Right ventricle myocardium superior (tissue), 1 donor: ENCODE measurements at regions of chr4 and their contacts with region 1.

Region 1: GRCh38 chr4:140884431-140885058 is 128.4 kb upstream of the TBC1D9 start:
- DNase-seq: no peak
- ATAC-seq: peak; percentile 73

Region 2: DNA sequence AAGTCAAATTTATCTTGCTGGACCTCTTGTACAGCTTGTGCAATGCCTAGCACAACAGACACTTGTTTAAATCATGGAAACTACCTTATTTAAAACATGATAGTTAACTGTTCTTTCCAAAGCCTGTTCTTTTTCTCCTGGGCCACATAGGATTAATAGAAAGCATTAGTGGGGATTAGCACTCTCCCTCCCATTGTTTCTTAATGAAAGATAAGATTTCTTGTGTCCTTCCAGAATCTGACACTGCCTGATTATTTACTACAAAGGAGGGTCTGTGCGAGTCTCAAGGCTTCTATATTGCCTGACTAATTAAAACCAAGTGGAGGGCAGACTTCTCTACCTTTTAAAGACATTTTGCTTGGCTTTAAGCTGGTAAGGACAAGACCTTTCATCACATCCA is 369.1 kb before region 1 on chr4:
- intact Hi-C with region 1: no loop called
- DNase-seq: no peak
- ATAC-seq: no peak

Region 3: GRCh38 chr4:140982613-140983340 is 98.2 kb after region 1 on chr4:
- intact Hi-C with region 1: loop called (anchors 10 kb)
- DNase-seq: no peak
- ATAC-seq: peak; percentile 72

Region 4: DNA sequence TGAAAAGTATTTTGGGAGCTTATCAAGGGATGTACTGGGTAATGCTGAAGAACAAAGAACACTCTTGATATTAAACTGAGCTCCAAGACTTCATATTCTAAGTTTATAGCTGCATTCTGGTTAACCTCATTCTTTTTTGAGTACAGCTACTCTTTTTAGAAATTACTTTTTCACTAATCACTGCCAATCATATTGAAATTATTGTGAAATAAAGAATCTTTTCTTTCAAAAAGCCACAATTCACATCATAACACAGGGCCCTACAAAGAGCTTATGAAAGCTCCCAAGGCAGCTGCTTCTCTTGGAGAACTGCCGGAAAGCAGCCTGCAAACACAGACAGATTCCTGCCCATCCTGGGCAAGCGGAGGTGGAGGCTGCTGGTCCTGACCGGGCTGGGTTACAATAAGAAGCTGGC is 127.4 kb after region 1 on chr4:
- intact Hi-C with region 1: no loop called
- DNase-seq: no peak
- ATAC-seq: peak; percentile 54